ENCODE measurements at regions of chr7 and their contacts with region 1.

Region 1: GRCh38 chr7:140027858-140028257 is 34.9 kb downstream of the PARP12 start:
- DNase-seq: no peak
- ATAC-seq: no peak

Region 2: GRCh38 chr7:139909379-139910050 is 118.3 kb before region 1 on chr7:
- intact Hi-C with region 1: no loop called
- DNase-seq: no peak
- ATAC-seq: peak; percentile 53

Region 3: DNA sequence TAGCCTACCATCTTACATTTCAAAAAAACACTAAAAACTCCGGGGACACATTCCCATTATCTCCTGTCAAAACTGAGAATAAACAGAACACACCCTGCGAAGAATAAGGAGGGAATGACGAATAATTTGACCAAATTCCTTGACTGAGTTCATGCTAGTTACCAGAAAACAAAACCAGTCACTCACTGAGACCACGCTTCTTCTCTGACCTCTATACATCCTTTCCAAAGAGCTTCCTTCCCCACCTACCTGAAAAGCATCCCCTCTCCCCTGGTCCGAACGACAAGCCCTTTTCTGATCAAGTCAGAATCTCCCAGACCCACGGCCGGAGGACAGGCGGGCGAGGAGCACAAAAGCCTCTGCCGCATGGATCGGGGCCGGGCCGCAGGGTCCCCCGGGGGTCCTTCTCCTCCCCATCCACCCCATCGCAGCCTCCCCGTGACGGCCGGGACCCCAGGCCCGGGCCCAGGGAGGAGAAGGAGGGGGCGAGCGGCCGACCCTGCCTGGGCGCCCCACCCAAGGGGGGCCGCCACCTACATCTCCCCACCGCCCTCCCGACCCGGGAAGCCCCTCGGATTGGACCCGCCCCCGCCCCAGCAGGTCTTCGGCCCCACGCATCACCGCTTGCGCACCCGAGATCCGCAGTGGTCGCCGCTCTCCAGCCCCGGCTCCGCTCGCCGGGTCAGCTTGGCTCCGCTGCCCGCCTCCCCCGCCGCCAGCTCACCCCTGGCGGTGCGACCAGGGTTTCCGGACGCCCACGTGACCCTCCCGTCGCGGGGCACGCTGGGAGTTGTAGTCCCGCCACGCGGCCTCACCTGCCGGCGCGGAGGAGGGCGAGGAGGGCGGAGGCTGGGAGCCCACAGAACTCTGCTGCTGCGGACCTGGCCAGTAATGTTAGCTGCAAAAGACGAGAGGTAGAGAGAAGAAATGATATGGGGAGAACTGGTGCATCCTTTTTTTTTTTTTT is 370.2 kb after region 1 on chr7 and contains the start of gene SLC37A3:
- intact Hi-C with region 1: no loop called
- DNase-seq: peak; percentile 92
- ATAC-seq: peak; percentile 97
- total RNA-seq, gene SLC37A3: 56.7 TPM

Region 4: DNA sequence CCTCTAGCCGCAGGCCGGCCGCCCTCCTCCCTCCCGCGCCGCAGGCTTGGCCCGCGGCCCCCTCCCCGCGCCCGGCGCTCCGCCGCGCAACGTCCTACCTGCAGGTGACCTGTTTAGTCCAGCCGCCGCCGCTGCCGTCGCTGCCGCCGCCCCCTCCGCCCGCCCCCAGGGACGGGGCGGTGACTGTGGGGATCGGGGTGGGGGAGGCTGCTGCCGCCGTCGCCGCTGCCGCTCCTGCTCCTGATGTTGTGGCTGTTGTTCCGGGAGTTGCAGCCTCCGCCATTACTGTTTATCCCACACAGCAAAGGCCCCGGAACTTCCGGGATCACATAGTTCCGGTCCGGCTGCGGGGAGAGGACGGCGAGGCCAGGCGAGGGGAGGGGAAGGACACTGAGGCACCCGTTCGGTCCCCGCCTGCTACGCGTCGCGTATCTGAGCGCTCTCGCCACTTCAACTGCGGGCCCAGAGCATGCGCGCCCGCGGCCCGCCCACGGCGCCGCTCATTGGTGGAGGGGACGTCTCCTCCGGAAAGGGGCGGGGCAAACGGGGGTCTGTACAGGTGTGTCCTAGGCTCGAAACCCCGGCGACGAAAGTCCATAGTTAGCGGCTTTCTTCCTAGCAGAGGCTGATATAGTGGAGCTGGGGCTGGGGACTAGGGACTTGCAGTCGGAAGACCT is 451.3 kb after region 1 on chr7 and contains the start of gene MKRN1:
- intact Hi-C with region 1: no loop called
- DNase-seq: peak; percentile 94
- ATAC-seq: peak; percentile 98
- total RNA-seq, gene MKRN1: 113 TPM

Region 5: DNA sequence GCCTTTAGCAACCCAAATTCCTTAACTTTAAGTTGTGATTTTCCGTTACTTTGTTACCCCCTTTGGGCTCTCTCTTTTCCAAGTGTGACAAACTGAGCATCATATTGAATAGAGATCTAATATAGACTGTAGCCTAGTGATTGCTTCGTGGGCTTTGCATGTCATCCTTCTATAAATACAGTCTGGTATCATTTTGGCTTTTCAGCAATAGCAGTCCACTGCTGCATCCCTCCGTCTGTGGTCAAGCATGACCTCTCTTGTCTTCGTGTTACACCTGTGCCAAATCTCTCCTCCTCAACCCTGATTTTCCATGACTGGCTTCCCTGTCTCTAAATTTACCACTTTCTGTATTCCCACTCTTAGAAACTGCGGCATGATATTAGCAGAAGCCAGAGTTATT is 1469.5 kb after region 1 on chr7:
- intact Hi-C with region 1: loop called (anchors 5 kb)
- DNase-seq: no peak
- ATAC-seq: no peak

Measured in sciatic nerve (tissue), 2 donors.